GM12878 (cell line): ENCODE measurements at regions of chr2 and their contacts with region 1.

Region 1: GRCh38 chr2:166321076-166321475 is 54.7 kb downstream of the SCN9A start:
- DNase-seq: no peak
- ATAC-seq: no peak
- H3K4me3 ChIP-seq: no peak overlapping the region
- H3K27ac ChIP-seq: no peak overlapping the region
- H3K4me1 ChIP-seq: no peaks in the 10 kb centered on the region
- H3K27me3 ChIP-seq: no peaks in the 10 kb centered on the region
- CTCF ChIP-seq: no peak
- EP300 ChIP-seq: no peak
- POLR2A ChIP-seq: no peak
- RAD21 ChIP-seq: no peak

Region 2: GRCh38 chr2:166269322-166269721 is 51.8 kb before region 1 on chr2:
- CTCF ChIA-PET with region 1: no interaction called
- POLR2A ChIA-PET with region 1: no interaction called
- RAD21 ChIA-PET with region 1: no interaction called
- SMC1A ChIA-PET with region 1: no interaction called
- in situ Hi-C with region 1: no loop called
- intact Hi-C with region 1: no loop called
- DNase-seq: no peak
- ATAC-seq: no peak
- H3K4me3 ChIP-seq: no peak overlapping the region
- H3K27ac ChIP-seq: no peak overlapping the region
- H3K4me1 ChIP-seq: no peaks in the 10 kb centered on the region
- H3K27me3 ChIP-seq: no peaks in the 10 kb centered on the region
- CTCF ChIP-seq: no peak
- EP300 ChIP-seq: no peak
- POLR2A ChIP-seq: no peak
- RAD21 ChIP-seq: no peak

Region 3: GRCh38 chr2:166337932-166338331 is 16.9 kb after region 1 on chr2:
- CTCF ChIA-PET with region 1: no interaction called
- POLR2A ChIA-PET with region 1: no interaction called
- RAD21 ChIA-PET with region 1: no interaction called
- SMC1A ChIA-PET with region 1: no interaction called
- in situ Hi-C with region 1: no loop called
- intact Hi-C with region 1: loop called (anchors 2 kb)
- DNase-seq: no peak
- ATAC-seq: no peak
- H3K4me3 ChIP-seq: no peak overlapping the region
- H3K27ac ChIP-seq: no peak overlapping the region
- H3K4me1 ChIP-seq: no peaks in the 10 kb centered on the region
- H3K27me3 ChIP-seq: no peaks in the 10 kb centered on the region
- CTCF ChIP-seq: no peak
- EP300 ChIP-seq: no peak
- POLR2A ChIP-seq: no peak
- RAD21 ChIP-seq: no peak